Natural killer cell (primary cell): ENCODE measurements at regions of chr7 and their contacts with region 1.

Region 1: GRCh38 chr7:26200444-26201246 is at the start of gene HNRNPA2B1:
- DNase-seq: peak; percentile 98 to 99
- ATAC-seq: peak; percentile 69 to 87 (median 69)
- H3K4me3 ChIP-seq: peak within 1 kb of the TSS; percentile 87
- H3K4me3 Mint-ChIP-seq: peak within 1 kb of the TSS; percentile 100
- H3K27ac ChIP-seq: peak within 1 kb of the TSS; percentile 95
- H3K27ac Mint-ChIP-seq: peak within 1 kb of the TSS; percentile 100
- H3K4me1 ChIP-seq: peaks cover 14% of the 10 kb centered on the region
- H3K4me1 Mint-ChIP-seq: peaks cover 84 to 85% of the 10 kb centered on the region in 2 donors
- H3K27me3 ChIP-seq: no peaks in the 10 kb centered on the region
- H3K27me3 Mint-ChIP-seq: peaks cover 2 to 5% of the 10 kb centered on the region in 2 donors
- CTCF ChIP-seq: no peak
- total RNA-seq, gene HNRNPA2B1: 473 to 627 (median 585) TPM

Region 2: DNA sequence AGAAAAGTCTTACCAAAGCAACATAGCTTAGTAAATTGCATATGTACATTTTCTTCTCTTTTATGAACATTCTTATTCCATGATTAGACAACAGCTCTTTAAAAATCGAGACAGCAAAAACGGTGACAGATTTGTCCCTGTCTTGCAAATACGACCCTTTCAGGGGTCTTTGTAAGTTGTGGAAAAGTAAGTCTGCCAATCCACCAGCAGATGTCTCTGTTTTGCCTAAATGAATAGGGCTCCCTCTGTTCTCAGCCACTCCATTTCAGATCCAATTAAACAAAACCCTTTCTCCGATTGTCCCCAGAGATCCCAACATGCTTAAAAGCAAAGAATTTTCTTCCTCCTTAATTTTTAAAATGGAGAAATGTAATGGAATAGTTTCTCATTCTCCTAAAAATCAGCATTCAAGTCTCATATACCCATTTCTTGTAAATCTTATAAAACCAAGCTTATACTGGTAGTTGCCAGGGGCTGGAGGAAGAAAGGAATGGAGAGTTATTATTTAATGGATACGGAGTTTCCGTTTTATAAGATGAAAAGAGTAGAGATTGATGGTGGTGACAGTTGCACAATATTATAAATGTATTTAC is 109.6 kb before region 1 on chr7:
- intact Hi-C with region 1: loop called (anchors 1 kb)
- DNase-seq: peak in 1 of 2 donors; percentile 72
- ATAC-seq: peak; percentile 60 to 77 (median 63)
- H3K4me3 ChIP-seq: no peak overlapping the region
- H3K4me3 Mint-ChIP-seq: peak overlapping the region; percentile 57
- H3K27ac ChIP-seq: no peak overlapping the region
- H3K27ac Mint-ChIP-seq: no peak overlapping the region
- H3K4me1 ChIP-seq: no peaks in the 10 kb centered on the region
- H3K4me1 Mint-ChIP-seq: peaks cover 7 to 14% of the 10 kb centered on the region in 2 donors
- H3K27me3 ChIP-seq: no peaks in the 10 kb centered on the region
- H3K27me3 Mint-ChIP-seq: peaks cover 0 to 9% of the 10 kb centered on the region in 2 donors
- CTCF ChIP-seq: peak; percentile 61

Region 3: DNA sequence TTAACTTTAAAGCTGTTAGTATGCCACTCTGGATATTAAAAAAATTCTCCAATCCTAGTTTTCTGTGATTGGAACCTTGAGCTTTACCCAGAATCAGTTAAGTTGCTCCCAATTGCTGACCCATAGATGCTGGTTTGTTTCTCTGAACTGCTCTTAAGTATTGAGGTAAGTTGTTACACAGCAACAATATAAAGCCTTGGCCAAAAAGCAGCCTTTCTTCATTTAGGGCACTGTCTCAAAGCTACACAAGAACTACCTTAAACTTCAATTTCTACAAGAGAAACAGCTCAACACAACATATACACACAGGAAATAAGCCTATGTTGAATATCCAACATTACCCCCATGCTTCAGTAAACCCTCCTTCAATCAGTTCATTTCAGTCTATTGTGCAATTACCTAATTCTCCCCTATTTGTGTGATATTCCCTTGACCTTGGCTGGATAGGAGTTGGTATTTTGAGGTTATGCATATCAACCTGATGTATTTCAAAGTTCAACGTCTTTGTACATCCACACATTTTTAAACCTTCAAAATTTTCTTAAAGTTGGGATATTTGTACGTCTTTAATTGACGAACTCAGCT is 11.6 kb before region 1 on chr7:
- intact Hi-C with region 1: loop called (anchors 1 kb)
- DNase-seq: peak in 1 of 2 donors; percentile 27
- ATAC-seq: no peak
- H3K4me3 ChIP-seq: no peak overlapping the region
- H3K4me3 Mint-ChIP-seq: peak overlapping the region; percentile 7
- H3K27ac ChIP-seq: peak overlapping the region; percentile 12
- H3K27ac Mint-ChIP-seq: peak overlapping the region; percentile 100
- H3K4me1 ChIP-seq: peaks cover 7% of the 10 kb centered on the region
- H3K4me1 Mint-ChIP-seq: peaks cover 92 to 93% of the 10 kb centered on the region in 2 donors
- H3K27me3 ChIP-seq: no peaks in the 10 kb centered on the region
- H3K27me3 Mint-ChIP-seq: no peaks in the 10 kb centered on the region
- CTCF ChIP-seq: no peak

Region 4: GRCh38 chr7:26237035-26237807 is 36.6 kb after region 1 on chr7:
- intact Hi-C with region 1: no loop called
- DNase-seq: no peak
- ATAC-seq: no peak
- H3K4me3 ChIP-seq: no peak overlapping the region
- H3K4me3 Mint-ChIP-seq: no peak overlapping the region
- H3K27ac ChIP-seq: no peak overlapping the region
- H3K27ac Mint-ChIP-seq: no peak overlapping the region
- H3K4me1 ChIP-seq: no peaks in the 10 kb centered on the region
- H3K4me1 Mint-ChIP-seq: no peaks in the 10 kb centered on the region
- H3K27me3 ChIP-seq: no peaks in the 10 kb centered on the region
- H3K27me3 Mint-ChIP-seq: peaks cover 0 to 7% of the 10 kb centered on the region in 2 donors
- CTCF ChIP-seq: no peak

Region 5: DNA sequence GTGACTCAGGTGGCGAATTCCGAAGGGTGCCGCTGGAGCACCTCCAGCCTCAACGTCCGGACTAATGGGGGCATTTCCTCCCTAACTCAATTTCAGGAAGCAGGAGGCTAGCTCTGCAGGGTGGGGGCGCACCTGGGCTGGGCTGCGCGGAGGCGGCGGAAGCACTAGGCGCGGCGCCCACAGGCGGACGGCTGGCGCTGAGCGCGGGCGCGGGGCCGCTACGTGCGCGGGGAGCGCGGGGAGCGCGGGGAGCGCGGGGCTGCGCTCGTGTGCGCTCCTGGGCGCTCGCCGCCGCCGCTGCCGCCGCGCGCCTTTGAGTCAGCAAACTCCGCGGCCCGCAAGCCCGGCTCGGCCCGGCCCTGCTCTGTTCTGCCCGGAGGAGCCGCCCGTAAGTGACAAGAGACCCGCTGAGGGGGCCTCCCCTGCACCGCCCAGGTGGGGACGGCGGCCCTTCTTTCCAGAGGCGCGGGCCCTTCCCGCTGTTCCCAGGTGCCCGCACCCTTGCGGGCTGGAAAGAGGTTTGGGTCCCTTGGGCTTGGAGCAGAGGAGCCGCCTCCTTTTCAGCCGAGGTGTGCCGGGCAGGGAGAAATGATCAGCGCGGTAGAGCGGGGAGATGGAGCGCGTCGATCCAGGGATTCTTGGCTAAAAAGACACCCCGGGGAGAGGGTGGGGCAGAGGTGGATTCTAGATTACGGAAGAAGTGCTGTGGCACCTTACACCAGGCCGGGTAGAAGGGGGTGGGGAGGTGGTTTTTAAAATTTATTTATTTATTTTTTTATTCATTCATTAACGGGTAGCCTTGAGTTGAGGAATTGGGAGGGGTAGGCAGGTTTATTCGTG is 91.3 kb after region 1 on chr7 and contains the start of gene SNX10:
- intact Hi-C with region 1: loop called (anchors 1 kb)
- DNase-seq: peak; percentile 70 to 89
- ATAC-seq: peak; percentile 66 to 83 (median 73)
- H3K4me3 ChIP-seq: peak within 1 kb of the TSS; percentile 98
- H3K4me3 Mint-ChIP-seq: peak within 1 kb of the TSS; percentile 97
- H3K27ac ChIP-seq: peak within 1 kb of the TSS; percentile 94
- H3K27ac Mint-ChIP-seq: peak within 1 kb of the TSS; percentile 97
- H3K4me1 ChIP-seq: peaks cover 42% of the 10 kb centered on the region
- H3K4me1 Mint-ChIP-seq: peaks cover 36 to 46% of the 10 kb centered on the region in 2 donors
- H3K27me3 ChIP-seq: no peaks in the 10 kb centered on the region
- H3K27me3 Mint-ChIP-seq: no peaks in the 10 kb centered on the region
- CTCF ChIP-seq: no peak
- total RNA-seq, gene SNX10: 17.2 to 26.8 (median 21.3) TPM